ENCODE measurements at regions of chr6 and their contacts with region 1.

Region 1: GRCh38 chr6:13614926-13615798 is at the start of gene NOL7:
- DNase-seq: peak; percentile 99
- ATAC-seq: peak; percentile 91
- H3K4me3 Mint-ChIP-seq: peak within 1 kb of the TSS; percentile 98
- H3K27ac Mint-ChIP-seq: peak within 1 kb of the TSS; percentile 96
- H3K4me1 Mint-ChIP-seq: peaks cover 44% of the 10 kb centered on the region
- H3K27me3 Mint-ChIP-seq: no peaks in the 10 kb centered on the region
- total RNA-seq, gene NOL7: 54.0 to 55.5 TPM

Region 2: GRCh38 chr6:13574149-13574570 is 41.0 kb before region 1 on chr6:
- POLR2A ChIA-PET with region 1: interaction called, 36 read pairs
- DNase-seq: peak; percentile 95
- ATAC-seq: peak; percentile 84
- H3K4me3 Mint-ChIP-seq: peak overlapping the region; percentile 100
- H3K27ac Mint-ChIP-seq: peak overlapping the region; percentile 99
- H3K4me1 Mint-ChIP-seq: peaks cover 23% of the 10 kb centered on the region
- H3K27me3 Mint-ChIP-seq: no peaks in the 10 kb centered on the region

Region 3: DNA sequence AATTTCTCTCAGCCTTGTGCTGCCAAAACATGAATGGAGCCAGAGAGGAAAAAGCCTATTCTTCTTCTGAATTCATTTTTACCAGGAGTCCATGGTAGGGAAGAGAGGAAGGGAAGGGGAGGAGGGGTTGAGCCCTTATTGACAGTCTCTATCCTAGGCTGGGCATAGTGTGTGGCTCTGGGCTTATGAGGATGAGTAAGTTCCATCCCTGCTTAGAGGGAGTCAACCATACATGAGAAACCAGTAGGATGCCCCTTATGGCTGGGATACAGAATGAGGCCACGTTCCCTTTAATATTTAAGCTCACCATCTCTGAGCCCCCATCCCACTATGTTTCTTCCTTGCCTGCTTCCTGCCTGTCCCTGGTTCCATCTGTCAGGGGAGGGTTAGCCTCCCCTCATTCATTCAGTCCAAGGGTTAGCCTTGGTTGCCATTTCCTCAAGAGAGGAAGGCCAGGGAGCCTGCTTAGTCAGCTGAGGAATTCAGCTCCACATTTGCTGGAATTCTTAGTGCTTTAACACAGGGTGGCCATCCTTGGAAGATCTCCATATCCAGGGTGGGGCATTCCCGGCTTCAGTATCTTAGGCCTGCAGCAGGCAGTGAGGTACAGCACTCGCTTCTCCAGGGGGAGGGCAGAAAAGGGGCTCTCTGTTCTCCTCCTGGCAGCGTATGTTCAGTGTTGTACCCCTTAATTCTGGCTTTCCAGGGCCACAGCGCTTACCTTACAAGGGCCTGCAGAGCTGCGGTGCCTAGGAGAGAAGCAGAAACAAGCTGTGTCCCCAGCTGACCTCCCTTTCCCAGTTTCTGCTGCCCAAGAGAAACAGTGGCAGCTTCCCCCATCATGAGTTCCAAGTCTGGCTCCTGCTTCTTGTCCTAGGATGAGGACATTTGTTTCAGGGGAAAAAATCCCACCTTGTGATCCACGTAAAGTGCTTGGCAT is 28.3 kb before region 1 on chr6:
- POLR2A ChIA-PET with region 1: no interaction called
- DNase-seq: no peak
- ATAC-seq: no peak
- H3K4me3 Mint-ChIP-seq: no peak overlapping the region
- H3K27ac Mint-ChIP-seq: no peak overlapping the region
- H3K4me1 Mint-ChIP-seq: no peaks in the 10 kb centered on the region
- H3K27me3 Mint-ChIP-seq: no peaks in the 10 kb centered on the region

Region 4: DNA sequence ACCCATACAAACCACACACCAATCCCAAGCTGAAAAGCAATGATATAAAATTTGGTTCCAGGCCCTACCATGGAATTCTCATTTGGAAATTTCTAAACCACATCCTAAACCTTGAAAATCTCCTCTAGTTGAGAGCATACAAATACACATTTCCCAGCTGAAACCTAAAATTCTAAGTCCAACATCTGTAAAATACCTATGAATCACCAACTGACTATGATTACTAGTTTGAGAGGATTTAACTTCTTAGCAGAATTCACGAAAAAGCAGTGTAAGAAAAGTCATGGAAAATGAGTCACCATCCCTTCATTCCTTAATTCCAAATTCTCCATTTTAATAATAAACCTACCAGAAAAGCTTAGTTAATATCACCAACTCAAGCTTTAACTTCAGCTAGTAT is 81.1 kb after region 1 on chr6:
- POLR2A ChIA-PET with region 1: interaction called, 13 read pairs
- DNase-seq: no peak
- ATAC-seq: no peak
- H3K4me3 Mint-ChIP-seq: no peak overlapping the region
- H3K27ac Mint-ChIP-seq: no peak overlapping the region
- H3K4me1 Mint-ChIP-seq: peaks cover 40% of the 10 kb centered on the region
- H3K27me3 Mint-ChIP-seq: no peaks in the 10 kb centered on the region

Region 5: GRCh38 chr6:13711733-13712598 is 96.8 kb after region 1 on chr6 and contains the start of gene RANBP9:
- POLR2A ChIA-PET with region 1: interaction called, 47 read pairs
- DNase-seq: peak; percentile 95
- ATAC-seq: peak; percentile 84
- H3K4me3 Mint-ChIP-seq: peak within 1 kb of the TSS; percentile 98
- H3K27ac Mint-ChIP-seq: peak within 1 kb of the TSS; percentile 97
- H3K4me1 Mint-ChIP-seq: peaks cover 38% of the 10 kb centered on the region
- H3K27me3 Mint-ChIP-seq: no peaks in the 10 kb centered on the region
- total RNA-seq, gene RANBP9: 55.3 to 56.3 TPM

Region 6: GRCh38 chr6:13762611-13763441 is 147.7 kb after region 1 on chr6:
- POLR2A ChIA-PET with region 1: interaction called, 11 read pairs
- DNase-seq: peak; percentile 40
- ATAC-seq: peak; percentile 79
- H3K4me3 Mint-ChIP-seq: peak overlapping the region; percentile 81
- H3K27ac Mint-ChIP-seq: peak overlapping the region; percentile 78
- H3K4me1 Mint-ChIP-seq: peaks cover 45% of the 10 kb centered on the region
- H3K27me3 Mint-ChIP-seq: no peaks in the 10 kb centered on the region

Measured in activated naive CD8-positive, alpha-beta T cell treated with anti-CD3 and anti-CD28 coated beads, Interleukin-2, amount 10 ng/mL, durations not matched to agents 7 days and 5 days (primary cell).